Gastrocnemius medialis (tissue), 4 donors: ENCODE measurements at regions of chr13 and their contacts with region 1.

Region 1: GRCh38 chr13:59391696-59392095 is 772.0 kb downstream of the DIAPH3 start:
- DNase-seq: peak in 1 of 2 donors; percentile 6
- ATAC-seq: peak; percentile 36 to 47
- H3K4me3 ChIP-seq: no peak overlapping the region
- H3K27ac ChIP-seq: no peak overlapping the region
- H3K4me1 ChIP-seq: peaks cover 0 to 5% of the 10 kb centered on the region in 2 donors
- H3K27me3 ChIP-seq: no peaks in the 10 kb centered on the region
- CTCF ChIP-seq: peak; percentile 40 to 64 (median 48)
- POLR2A ChIP-seq: no peak

Region 2: GRCh38 chr13:59425211-59425721 is 33.6 kb after region 1 on chr13:
- in situ Hi-C with region 1: no loop called
- intact Hi-C with region 1: no loop called
- DNase-seq: no peak
- ATAC-seq: no peak
- H3K4me3 ChIP-seq: no peak overlapping the region
- H3K27ac ChIP-seq: no peak overlapping the region
- H3K4me1 ChIP-seq: no peaks in the 10 kb centered on the region
- H3K27me3 ChIP-seq: no peaks in the 10 kb centered on the region
- CTCF ChIP-seq: no peak
- POLR2A ChIP-seq: no peak

Region 3: DNA sequence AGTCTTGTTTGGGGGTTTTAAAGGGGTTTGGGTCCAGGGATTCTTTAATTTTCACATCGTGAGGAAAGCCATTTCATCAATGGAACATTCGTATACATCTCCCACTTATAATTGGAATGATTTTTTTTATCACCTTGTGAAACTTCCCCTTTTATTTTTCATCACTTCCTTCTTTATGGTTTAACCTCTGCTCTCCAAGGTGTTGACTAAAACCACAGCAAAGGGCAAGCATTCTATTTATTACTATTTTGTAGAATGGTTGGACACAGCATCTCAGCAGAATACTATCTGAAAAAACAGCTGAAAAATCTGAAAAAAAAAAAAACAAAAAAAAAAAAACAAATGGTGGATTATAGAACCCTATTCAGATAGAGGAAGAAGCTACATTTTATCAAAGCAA is 46.2 kb after region 1 on chr13:
- in situ Hi-C with region 1: no loop called
- intact Hi-C with region 1: no loop called
- DNase-seq: no peak
- ATAC-seq: no peak
- H3K4me3 ChIP-seq: no peak overlapping the region
- H3K27ac ChIP-seq: no peak overlapping the region
- H3K4me1 ChIP-seq: no peaks in the 10 kb centered on the region
- H3K27me3 ChIP-seq: no peaks in the 10 kb centered on the region
- CTCF ChIP-seq: no peak
- POLR2A ChIP-seq: no peak

Region 4: GRCh38 chr13:59677966-59678814 is 286.5 kb after region 1 on chr13:
- in situ Hi-C with region 1: loop called in 2 of 4 experiments (anchors 5 to 10 kb)
- intact Hi-C with region 1: loop called (anchors 2 kb)
- DNase-seq: no peak
- ATAC-seq: no peak
- H3K4me3 ChIP-seq: peak overlapping the region in 1 of 4 donors; percentile 12
- H3K27ac ChIP-seq: no peak overlapping the region
- H3K4me1 ChIP-seq: peaks cover 13 to 18% of the 10 kb centered on the region in 2 donors
- H3K27me3 ChIP-seq: no peaks in the 10 kb centered on the region
- CTCF ChIP-seq: peak; percentile 25 to 61 (median 47)
- POLR2A ChIP-seq: no peak

Region 5: DNA sequence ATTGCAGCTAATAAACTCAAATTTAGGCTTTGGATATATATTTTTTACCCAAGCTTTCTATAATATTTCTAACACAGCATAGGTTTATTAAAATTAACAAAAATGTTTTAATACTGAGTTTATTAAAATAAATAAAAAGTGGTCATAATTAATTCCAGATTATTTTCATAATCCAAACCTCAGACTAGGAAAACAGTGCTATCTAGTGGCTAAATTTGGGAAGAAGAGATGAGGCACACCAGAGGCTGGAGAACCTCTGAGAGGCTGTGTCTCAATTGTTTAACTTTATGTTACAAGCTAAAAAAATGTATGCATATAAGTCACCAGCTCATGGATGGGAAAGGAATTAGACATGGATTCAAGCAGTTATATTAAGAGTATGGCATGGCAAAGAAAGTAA is 379.6 kb after region 1 on chr13:
- in situ Hi-C with region 1: no loop called
- intact Hi-C with region 1: loop called (anchors 5 kb)
- DNase-seq: no peak
- ATAC-seq: no peak
- H3K4me3 ChIP-seq: no peak overlapping the region
- H3K27ac ChIP-seq: no peak overlapping the region
- H3K4me1 ChIP-seq: no peaks in the 10 kb centered on the region
- H3K27me3 ChIP-seq: no peaks in the 10 kb centered on the region
- CTCF ChIP-seq: no peak
- POLR2A ChIP-seq: no peak

Region 6: DNA sequence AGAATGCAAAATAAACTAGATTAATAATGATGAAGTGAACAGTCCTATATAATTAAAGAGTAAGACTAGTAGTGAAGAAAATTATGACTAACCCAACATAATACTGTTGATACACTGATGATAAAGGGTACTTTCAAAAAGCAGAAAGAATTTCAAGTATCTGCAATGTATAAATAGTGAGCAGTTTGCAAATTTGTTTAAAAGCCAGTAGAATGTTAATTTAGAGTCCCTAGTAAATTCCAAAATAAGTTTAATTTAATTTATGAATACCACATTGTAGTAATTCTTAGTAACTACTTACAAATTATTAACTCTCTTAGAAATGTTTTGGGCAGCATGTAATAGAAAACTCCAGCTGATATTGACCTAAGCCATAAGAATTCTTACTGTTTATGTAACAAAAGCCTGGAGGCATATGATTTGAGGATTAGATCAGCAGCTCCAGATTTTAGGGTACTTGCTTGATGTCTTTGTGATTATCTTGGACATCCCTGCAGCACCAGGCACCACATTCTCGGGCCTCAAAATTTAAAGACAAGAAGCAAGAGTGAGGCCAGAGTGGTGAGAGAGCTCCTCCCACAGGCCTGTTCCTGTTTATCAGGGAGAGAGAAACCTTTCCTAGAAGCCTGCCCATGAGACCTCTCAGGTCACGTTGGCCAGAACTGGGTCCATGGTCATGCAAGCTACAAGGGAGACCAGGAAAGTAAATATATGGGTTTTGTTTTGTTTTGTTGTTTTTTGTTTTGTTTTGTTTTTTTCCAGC is 937.7 kb after region 1 on chr13:
- in situ Hi-C with region 1: loop called in 1 of 4 experiments (anchors 25 kb)
- intact Hi-C with region 1: no loop called
- DNase-seq: no peak
- ATAC-seq: no peak
- H3K4me3 ChIP-seq: no peak overlapping the region
- H3K27ac ChIP-seq: no peak overlapping the region
- H3K4me1 ChIP-seq: no peaks in the 10 kb centered on the region
- H3K27me3 ChIP-seq: no peaks in the 10 kb centered on the region
- CTCF ChIP-seq: no peak
- POLR2A ChIP-seq: no peak